GM23248 (cell line): ENCODE measurements at regions of chr9 and their contacts with region 1.

Region 1: DNA sequence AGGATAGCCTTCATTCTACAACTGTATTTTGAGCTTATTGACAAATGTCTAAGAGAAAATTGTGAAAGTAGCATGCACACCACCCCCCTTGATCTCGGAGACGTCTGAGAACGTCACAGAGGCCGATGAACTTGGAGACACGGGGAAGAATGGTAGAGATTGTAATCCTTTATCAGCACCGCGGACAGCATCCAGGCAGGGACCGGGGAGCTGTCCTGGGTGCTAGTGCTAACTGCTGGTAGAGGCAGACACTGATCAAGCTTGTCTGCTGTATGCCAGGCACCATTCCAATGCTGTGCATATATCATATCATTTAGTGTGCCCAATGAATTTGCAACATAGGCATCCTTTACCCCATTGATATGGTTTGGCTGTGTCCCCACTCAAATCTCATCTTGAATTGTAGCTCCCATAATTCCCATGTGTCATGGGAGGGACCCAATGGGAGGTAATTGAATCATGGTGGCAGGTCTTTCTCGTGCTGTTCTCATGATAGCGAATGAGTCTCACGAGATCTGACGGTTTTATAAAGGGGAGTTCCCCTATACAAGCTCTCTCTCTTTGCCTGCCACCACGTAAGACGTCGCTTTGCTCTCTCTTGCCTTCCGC is 98.8 kb downstream of the LHX2 start:
- DNase-seq: peak; percentile 81
- H3K4me3 ChIP-seq: no peak overlapping the region
- H3K27ac ChIP-seq: no peak overlapping the region
- H3K4me1 ChIP-seq: no peaks in the 10 kb centered on the region
- H3K27me3 ChIP-seq: peaks cover 24% of the 10 kb centered on the region

Region 2: DNA sequence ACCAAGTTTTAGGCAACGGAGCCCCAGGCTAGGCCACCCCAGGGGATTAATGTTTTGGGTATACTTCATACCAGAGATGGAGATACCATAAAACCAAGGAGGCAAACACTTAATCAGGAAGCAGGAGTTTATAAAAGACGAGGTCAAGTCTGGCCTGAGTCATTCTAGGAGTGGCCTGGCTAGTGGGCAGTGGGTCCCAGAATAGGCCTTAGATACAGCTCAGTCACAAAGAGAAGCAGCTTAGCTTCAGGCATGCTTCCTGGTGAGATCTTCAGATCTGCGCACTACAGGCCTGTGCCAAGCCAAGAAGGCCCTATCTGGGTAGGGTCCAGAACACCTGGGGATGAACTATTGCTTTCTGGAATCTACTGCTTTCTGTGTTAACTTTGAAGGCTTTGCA is 417.4 kb after region 1 on chr9:
- in situ Hi-C with region 1: loop called (anchors 25 kb)
- DNase-seq: peak; percentile 40
- H3K4me3 ChIP-seq: no peak overlapping the region
- H3K27ac ChIP-seq: no peak overlapping the region
- H3K4me1 ChIP-seq: no peaks in the 10 kb centered on the region
- H3K27me3 ChIP-seq: no peaks in the 10 kb centered on the region; the same call in 1 of the 2 replicates